ENCODE measurements at regions of chr3 and their contacts with region 1.

Region 1: DNA sequence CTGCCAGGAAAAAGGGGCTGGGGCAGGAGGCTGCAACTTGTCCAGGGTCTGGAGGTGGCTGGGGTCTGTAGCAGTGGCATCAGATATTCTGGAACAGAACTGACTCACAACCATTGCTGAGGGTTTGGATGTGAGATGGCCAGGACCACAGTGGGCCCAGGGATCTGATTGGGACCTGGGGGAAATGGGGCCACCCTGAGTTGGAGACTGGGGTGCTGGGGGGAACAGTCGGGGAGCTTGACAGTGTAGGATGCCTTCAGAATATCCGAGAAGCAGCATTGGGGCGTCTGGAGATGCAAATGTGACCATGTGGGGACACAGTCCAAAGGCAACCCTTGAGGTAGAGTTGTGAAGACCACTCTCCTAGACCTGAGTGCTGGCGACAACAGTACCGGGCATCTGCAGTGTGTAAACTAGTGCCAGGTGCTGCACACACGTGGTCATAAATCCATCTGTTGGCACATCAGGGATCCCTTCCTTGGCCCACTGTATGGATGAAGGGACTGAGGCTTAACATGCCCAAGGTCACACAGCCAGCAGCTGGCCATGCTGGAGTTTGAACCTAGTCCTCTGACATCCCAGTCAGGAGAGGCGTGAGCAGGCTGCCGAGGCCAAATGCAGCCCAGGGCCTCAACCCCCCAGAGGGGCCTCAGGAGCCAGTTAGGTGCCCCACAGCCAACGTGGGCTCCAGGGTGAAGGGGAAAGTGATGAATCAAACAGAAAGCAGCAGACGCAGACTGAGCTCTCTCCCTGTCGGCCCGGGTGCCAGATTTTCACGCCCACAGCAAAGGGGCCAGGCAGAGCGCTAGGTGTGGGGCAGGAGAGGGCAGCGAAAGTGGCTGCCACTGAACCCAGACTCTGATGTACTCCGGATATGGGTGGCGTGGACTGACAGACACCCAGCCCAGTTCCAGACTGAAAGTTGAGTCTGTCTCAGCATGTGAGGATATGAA is 18.8 kb downstream of the HEMK1 start:
- DNase-seq: peak in 7 of 9 experiments; percentile 27 to 84 (median 58)
- ATAC-seq: peak; percentile 67
- H3K4me3 ChIP-seq: no peak overlapping the region
- H3K4me3 Mint-ChIP-seq: peak overlapping the region; percentile 33
- H3K27ac ChIP-seq: peak overlapping the region in 1 of 2 experiments; percentile 79
- H3K27ac Mint-ChIP-seq: peak overlapping the region; percentile 88
- H3K4me1 ChIP-seq: peaks cover 55% of the 10 kb centered on the region
- H3K4me1 Mint-ChIP-seq: peaks cover 54% of the 10 kb centered on the region
- H3K27me3 ChIP-seq: no peaks in the 10 kb centered on the region
- H3K27me3 Mint-ChIP-seq: no peaks in the 10 kb centered on the region
- CTCF ChIP-seq: no peak

Region 2: GRCh38 chr3:50600841-50601591 is 12.9 kb after region 1 on chr3:
- CTCF ChIA-PET with region 1: interaction called, 968 read pairs
- POLR2A ChIA-PET with region 1: interaction called, 110 read pairs
- intact Hi-C with region 1: loop called in 1 of 2 experiments (anchors 1 kb)
- DNase-seq: peak in 8 of 9 experiments; percentile 50 to 83 (median 68)
- ATAC-seq: peak; percentile 62
- H3K4me3 ChIP-seq: peak overlapping the region; percentile 31 to 36
- H3K4me3 Mint-ChIP-seq: peak overlapping the region; percentile 72
- H3K27ac ChIP-seq: peak overlapping the region; percentile 52 to 87
- H3K27ac Mint-ChIP-seq: peak overlapping the region; percentile 94
- H3K4me1 ChIP-seq: peaks cover 77% of the 10 kb centered on the region
- H3K4me1 Mint-ChIP-seq: peaks cover 72% of the 10 kb centered on the region
- H3K27me3 ChIP-seq: no peaks in the 10 kb centered on the region
- H3K27me3 Mint-ChIP-seq: no peaks in the 10 kb centered on the region
- CTCF ChIP-seq: no peak

Measured in CD8-positive, alpha-beta T cell (primary cell).